Tibial artery (tissue), 4 donors: ENCODE measurements at regions of chr19 and their contacts with region 1.

Region 1: GRCh38 chr19:36120092-36120983 is 5.1 kb downstream of the TBCB start:
- DNase-seq: no peak
- H3K4me3 ChIP-seq: no peak overlapping the region
- H3K27ac ChIP-seq: no peak overlapping the region
- H3K4me1 ChIP-seq: peaks cover 0 to 16% (median 12%) of the 10 kb centered on the region in 4 donors
- H3K27me3 ChIP-seq: no peaks in the 10 kb centered on the region
- CTCF ChIP-seq: no peak

Region 2: DNA sequence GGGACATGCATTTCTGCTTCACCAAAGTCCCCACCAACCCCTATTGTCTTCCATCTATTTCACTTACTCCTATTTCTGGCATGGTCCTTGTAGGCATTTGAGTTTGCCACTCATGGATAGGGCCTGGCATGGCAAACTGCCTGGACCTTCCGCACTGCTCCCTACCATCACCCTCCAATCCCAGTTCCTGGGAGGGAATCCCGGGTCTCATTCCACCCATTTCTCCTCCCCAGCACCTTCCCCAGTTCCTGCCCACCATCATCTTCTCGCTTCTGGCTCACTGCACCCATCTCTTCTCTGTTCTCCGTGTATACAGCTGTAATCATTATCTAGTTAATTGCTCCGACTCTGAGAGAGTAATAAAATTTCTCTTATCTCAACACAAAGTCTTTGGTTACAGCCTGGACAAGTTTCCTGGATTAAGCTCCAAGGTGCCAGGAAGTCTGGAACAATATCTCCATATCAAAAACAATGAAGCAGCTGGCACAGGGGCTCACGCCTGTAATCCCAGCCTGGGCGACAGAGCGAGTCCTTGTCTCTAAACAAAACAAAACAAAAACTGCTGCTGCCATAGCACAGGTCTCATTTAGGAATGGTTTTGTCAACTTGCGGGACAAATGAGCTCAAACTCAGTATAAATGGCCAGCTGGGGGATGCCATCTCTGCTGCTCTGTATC is 48.9 kb after region 1 on chr19:
- intact Hi-C with region 1: loop called (anchors 5 kb)
- DNase-seq: peak in 1 of 2 donors; percentile 31
- H3K4me3 ChIP-seq: no peak overlapping the region
- H3K27ac ChIP-seq: peak overlapping the region; percentile 37 to 54
- H3K4me1 ChIP-seq: peaks cover 0 to 14% (median 1%) of the 10 kb centered on the region in 4 donors
- H3K27me3 ChIP-seq: no peaks in the 10 kb centered on the region
- CTCF ChIP-seq: no peak

Region 3: GRCh38 chr19:36225219-36225892 is 105.0 kb after region 1 on chr19:
- intact Hi-C with region 1: no loop called
- DNase-seq: no peak
- H3K4me3 ChIP-seq: no peak overlapping the region
- H3K27ac ChIP-seq: no peak overlapping the region
- H3K4me1 ChIP-seq: peaks cover 0 to 18% (median 14%) of the 10 kb centered on the region in 4 donors
- H3K27me3 ChIP-seq: no peaks in the 10 kb centered on the region
- CTCF ChIP-seq: no peak